Activated naive CD4-positive, alpha-beta T cell treated with anti-CD3 and anti-CD28 coated beads, Interleukin-2, amount 10 ng/mL, durations not matched to agents 7 days and 5 days (primary cell): ENCODE measurements at regions of chr1 and their contacts with region 1.

Region 1: GRCh38 chr1:27365372-27366112 is 1.2 kb downstream of the MAP3K6 start:
- DNase-seq: peak; percentile 87
- H3K4me3 Mint-ChIP-seq: peak overlapping the region; percentile 84
- H3K27ac Mint-ChIP-seq: peak overlapping the region; percentile 81
- H3K4me1 Mint-ChIP-seq: peaks cover 53% of the 10 kb centered on the region
- H3K27me3 Mint-ChIP-seq: peaks cover 19% of the 10 kb centered on the region

Region 2: GRCh38 chr1:27179379-27179778 is 186.2 kb before region 1 on chr1:
- CTCF ChIA-PET with region 1: no interaction called
- DNase-seq: no peak
- H3K4me3 Mint-ChIP-seq: no peak overlapping the region
- H3K27ac Mint-ChIP-seq: no peak overlapping the region
- H3K4me1 Mint-ChIP-seq: no peaks in the 10 kb centered on the region
- H3K27me3 Mint-ChIP-seq: peaks cover 5% of the 10 kb centered on the region

Region 3: DNA sequence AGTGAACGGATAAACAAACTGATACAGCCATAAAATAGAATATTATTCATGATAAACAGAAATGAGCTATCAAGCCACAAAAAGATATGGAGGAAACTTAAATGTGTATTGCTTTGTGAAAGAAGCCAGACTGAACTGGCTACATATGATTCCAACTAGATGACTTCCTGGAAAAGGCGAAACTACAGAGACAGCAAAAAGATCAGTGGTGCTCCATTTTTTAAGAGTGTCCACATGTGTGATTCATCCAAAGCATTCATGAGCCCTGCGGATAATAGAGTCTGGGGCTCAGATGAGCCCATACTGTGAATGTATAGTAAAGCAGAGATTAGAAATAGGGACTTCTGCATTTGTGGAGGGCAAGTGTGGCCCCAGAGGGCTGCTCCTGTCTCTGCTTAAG is 51.4 kb before region 1 on chr1:
- CTCF ChIA-PET with region 1: no interaction called
- DNase-seq: no peak
- H3K4me3 Mint-ChIP-seq: no peak overlapping the region
- H3K27ac Mint-ChIP-seq: no peak overlapping the region
- H3K4me1 Mint-ChIP-seq: no peaks in the 10 kb centered on the region
- H3K27me3 Mint-ChIP-seq: peaks cover 24% of the 10 kb centered on the region

Region 4: DNA sequence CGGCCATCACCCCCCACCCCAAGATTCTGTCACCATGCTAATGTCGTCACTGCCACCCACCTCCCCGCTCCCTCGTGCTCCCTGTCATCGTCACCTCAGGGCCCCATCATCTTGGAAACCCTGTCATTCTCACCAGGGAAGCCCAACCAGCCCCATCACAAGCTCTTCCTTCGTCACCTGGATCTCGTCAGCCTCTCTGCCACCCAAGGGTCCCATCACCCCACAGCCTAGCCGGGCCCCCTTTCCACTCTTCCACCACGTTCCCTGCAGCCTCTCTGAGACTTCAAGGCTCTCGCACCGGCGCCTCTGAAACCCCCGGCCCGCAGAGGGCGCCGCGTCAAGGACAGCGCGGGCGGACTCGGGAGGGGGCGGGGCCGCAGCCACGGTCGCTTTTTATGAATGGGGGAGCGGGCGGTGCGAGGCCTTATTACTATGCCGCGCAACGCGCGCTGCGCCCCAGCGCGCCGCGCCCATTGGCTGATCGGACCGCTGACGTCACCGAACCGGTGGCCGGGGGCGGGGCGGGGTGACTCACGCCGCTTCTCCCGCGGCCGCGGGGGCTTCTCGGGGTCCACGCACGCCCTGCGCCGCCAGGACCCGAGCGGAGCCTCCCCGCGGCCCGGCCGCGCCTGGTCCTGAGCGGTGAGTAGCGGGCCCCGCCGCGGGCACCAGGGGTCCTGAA is 26.7 kb after region 1 on chr1 and contains the start of gene GPR3:
- CTCF ChIA-PET with region 1: interaction called, 28 read pairs
- DNase-seq: peak; percentile 96
- H3K4me3 Mint-ChIP-seq: peak within 1 kb of the TSS; percentile 71
- H3K27ac Mint-ChIP-seq: peak within 1 kb of the TSS; percentile 55
- H3K4me1 Mint-ChIP-seq: peaks cover 22% of the 10 kb centered on the region
- H3K27me3 Mint-ChIP-seq: peaks cover 35% of the 10 kb centered on the region